Activated CD4-positive, alpha-beta memory T cell treated with anti-CD3 and anti-CD28 coated beads for 36 hours (primary cell): ENCODE measurements at regions of chr7 and their contacts with region 1.

Region 1: DNA sequence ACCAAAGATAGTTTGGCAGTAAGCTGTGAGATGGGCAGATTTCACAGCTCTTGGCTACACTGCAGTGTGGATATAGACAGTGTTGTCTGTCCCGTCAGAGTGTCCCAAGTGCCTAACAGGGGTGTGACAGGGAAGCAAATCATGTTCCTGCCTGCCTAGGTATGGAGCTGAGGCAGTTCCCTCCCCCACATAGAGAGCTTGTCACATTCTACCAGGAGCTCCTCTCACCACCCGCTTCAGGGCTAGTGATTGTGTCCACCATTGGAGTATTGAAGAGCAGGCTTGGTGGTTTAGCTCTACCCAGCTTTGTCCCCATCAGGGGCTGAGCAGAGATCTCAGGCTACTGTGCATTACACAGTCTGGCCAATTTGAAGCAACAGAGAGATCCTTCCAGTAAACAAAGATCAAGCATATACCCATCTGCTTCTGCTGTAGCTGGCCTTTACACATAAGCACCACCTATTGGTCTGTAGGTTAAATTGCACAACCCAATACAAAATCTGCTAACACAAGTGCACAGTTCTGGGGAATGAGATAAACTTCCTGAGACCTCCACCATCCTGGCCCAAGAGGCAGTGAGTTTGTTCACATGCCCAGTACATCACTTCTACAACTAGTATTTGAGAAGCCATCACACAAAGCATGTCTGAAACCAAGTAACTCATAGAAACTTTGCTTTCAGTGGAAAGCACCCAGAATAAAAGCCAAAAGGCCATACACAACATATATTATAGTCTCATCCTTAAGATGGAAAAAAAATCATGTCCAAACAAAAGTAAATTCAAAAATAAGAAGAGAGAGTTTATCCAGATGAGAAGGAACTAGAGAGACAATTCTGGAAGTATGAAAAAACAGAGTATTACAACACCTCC is 67.3 kb downstream of the GLCCI1 start:
- DNase-seq: no peak
- H3K4me3 Mint-ChIP-seq: no peak overlapping the region
- H3K27ac Mint-ChIP-seq: peak overlapping the region; percentile 43
- H3K4me1 Mint-ChIP-seq: peaks cover 25% of the 10 kb centered on the region
- H3K27me3 Mint-ChIP-seq: no peaks in the 10 kb centered on the region

Region 2: DNA sequence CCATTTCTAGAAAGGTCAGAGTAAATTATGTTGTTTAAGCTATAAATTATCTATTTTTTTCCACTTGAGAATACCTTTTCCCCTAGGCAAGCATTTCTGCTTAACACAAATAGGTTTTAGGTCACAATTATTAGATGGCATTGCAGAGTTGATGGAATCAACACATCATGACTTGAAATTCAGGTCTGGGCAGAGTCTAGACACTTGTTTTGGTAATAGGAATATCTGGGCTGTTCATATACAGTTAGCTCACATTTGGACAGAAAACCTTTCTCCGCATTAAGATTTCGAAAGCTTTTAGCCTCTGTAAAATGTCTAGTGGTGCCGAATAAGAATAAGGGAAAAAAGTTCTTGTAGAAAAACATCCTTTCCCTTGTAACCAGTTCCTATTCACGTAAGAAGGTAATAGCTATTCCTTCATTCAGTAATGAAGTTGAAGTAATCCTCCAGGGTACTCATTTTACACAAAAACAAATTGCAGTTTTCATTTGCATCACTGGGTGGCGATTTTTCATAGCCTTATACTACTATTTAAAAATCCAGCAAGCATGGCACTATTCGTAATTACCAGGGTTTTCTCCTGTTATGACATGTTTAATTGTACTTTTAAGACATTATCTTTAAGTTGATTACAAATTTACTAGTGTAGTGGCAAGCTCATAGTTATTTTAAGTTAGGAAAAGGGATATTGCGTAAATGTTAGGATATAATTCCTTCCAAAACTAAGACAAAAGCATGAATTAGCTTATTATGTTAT is 354.5 kb before region 1 on chr7:
- CTCF ChIA-PET with region 1: interaction called, 30 read pairs
- POLR2A ChIA-PET with region 1: no interaction called
- intact Hi-C with region 1: loop called (anchors 2 kb)
- DNase-seq: no peak
- H3K4me3 Mint-ChIP-seq: no peak overlapping the region
- H3K27ac Mint-ChIP-seq: peak overlapping the region; percentile 52
- H3K4me1 Mint-ChIP-seq: peaks cover 30% of the 10 kb centered on the region
- H3K27me3 Mint-ChIP-seq: no peaks in the 10 kb centered on the region

Region 3: GRCh38 chr7:8015100-8015748 is 20.7 kb before region 1 on chr7:
- CTCF ChIA-PET with region 1: interaction called, 15 read pairs
- POLR2A ChIA-PET with region 1: no interaction called
- intact Hi-C with region 1: loop called (anchors 1 kb)
- DNase-seq: no peak
- H3K4me3 Mint-ChIP-seq: no peak overlapping the region
- H3K27ac Mint-ChIP-seq: peak overlapping the region; percentile 56
- H3K4me1 Mint-ChIP-seq: peaks cover 40% of the 10 kb centered on the region
- H3K27me3 Mint-ChIP-seq: no peaks in the 10 kb centered on the region